CD4-positive, alpha-beta T cell (primary cell): ENCODE measurements at regions of chr17 and their contacts with region 1.

Region 1: DNA sequence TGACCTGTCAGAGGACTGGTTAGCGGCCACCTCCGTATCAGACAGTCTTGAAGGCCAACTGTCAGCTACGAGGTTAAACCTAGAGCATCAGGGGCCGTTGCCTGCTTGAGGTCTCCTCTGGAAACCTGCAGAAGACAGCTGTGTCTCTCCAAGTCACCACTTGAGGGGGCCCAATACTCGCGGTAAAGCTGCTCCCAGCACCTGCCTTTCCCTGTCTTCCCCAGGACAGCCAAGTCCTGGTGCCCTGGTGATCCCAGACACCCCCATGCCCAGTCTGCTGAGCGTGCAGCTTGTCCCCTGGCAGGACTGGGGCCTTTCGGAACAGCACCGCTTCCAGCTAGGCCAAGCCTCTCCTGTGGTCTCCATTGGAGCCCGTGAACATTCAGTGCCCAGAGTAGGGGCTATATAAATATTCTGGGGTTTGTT is 80.1 kb downstream of the DNAH17 start:
- DNase-seq: peak; percentile 10 to 78 (median 46)
- ATAC-seq: peak; percentile 76
- H3K4me3 ChIP-seq: no peak overlapping the region
- H3K4me3 Mint-ChIP-seq: no peak overlapping the region
- H3K27ac ChIP-seq: no peak overlapping the region
- H3K27ac Mint-ChIP-seq: no peak overlapping the region
- H3K4me1 ChIP-seq: no peaks in the 10 kb centered on the region
- H3K4me1 Mint-ChIP-seq: no peaks in the 10 kb centered on the region
- H3K27me3 ChIP-seq: no peaks in the 10 kb centered on the region
- H3K27me3 Mint-ChIP-seq: no peaks in the 10 kb centered on the region
- CTCF ChIP-seq: peak; percentile 63

Region 2: GRCh38 chr17:78557598-78558039 is 60.5 kb after region 1 on chr17:
- CTCF ChIA-PET with region 1: interaction called, 5 read pairs
- POLR2A ChIA-PET with region 1: no interaction called
- intact Hi-C with region 1: loop called in 1 of 2 experiments (anchors 5 kb)
- DNase-seq: no peak
- ATAC-seq: no peak
- H3K4me3 ChIP-seq: no peak overlapping the region
- H3K4me3 Mint-ChIP-seq: no peak overlapping the region
- H3K27ac ChIP-seq: no peak overlapping the region
- H3K27ac Mint-ChIP-seq: no peak overlapping the region
- H3K4me1 ChIP-seq: no peaks in the 10 kb centered on the region
- H3K4me1 Mint-ChIP-seq: no peaks in the 10 kb centered on the region
- H3K27me3 ChIP-seq: no peaks in the 10 kb centered on the region
- H3K27me3 Mint-ChIP-seq: no peaks in the 10 kb centered on the region
- CTCF ChIP-seq: no peak

Region 3: DNA sequence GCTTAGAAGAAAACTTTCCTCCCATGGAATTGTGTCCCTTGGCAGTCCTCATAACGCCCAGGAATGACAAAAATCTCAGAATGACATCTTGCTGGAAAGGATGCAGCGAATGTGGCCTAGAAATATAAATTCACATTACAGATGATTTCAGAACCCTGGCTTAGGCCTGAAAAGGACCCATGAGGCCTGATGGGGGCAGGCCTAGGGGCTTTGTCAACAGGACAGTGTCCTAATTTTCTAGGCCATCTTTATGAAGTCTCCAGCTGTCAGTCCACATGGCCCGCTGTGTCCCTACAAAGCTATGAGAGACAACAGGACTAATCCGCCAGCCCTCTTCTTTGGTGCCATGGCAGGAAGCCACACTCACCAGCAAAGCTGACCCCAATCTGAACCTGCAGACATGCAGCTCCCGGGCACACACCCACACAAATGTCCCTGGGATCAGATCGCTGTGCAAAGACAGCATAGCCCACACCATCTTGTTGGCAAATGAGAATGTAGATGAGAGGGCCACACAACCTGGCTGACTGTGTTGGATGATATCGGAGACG is 120.5 kb after region 1 on chr17:
- CTCF ChIA-PET with region 1: no interaction called
- POLR2A ChIA-PET with region 1: no interaction called
- intact Hi-C with region 1: no loop called
- DNase-seq: no peak
- ATAC-seq: no peak
- H3K4me3 ChIP-seq: no peak overlapping the region
- H3K4me3 Mint-ChIP-seq: no peak overlapping the region
- H3K27ac ChIP-seq: no peak overlapping the region
- H3K27ac Mint-ChIP-seq: no peak overlapping the region
- H3K4me1 ChIP-seq: no peaks in the 10 kb centered on the region
- H3K4me1 Mint-ChIP-seq: no peaks in the 10 kb centered on the region
- H3K27me3 ChIP-seq: no peaks in the 10 kb centered on the region
- H3K27me3 Mint-ChIP-seq: no peaks in the 10 kb centered on the region
- CTCF ChIP-seq: no peak

Region 4: GRCh38 chr17:78708510-78708973 is 211.4 kb after region 1 on chr17:
- CTCF ChIA-PET with region 1: no interaction called
- POLR2A ChIA-PET with region 1: no interaction called
- intact Hi-C with region 1: loop called (anchors 1 to 5 kb)
- DNase-seq: peak; percentile 42 to 81 (median 54)
- ATAC-seq: peak; percentile 81
- H3K4me3 ChIP-seq: no peak overlapping the region
- H3K4me3 Mint-ChIP-seq: peak overlapping the region; percentile 79
- H3K27ac ChIP-seq: peak overlapping the region; percentile 11 to 39
- H3K27ac Mint-ChIP-seq: peak overlapping the region; percentile 78
- H3K4me1 ChIP-seq: peaks cover 51% of the 10 kb centered on the region
- H3K4me1 Mint-ChIP-seq: peaks cover 67% of the 10 kb centered on the region
- H3K27me3 ChIP-seq: no peaks in the 10 kb centered on the region
- H3K27me3 Mint-ChIP-seq: no peaks in the 10 kb centered on the region
- CTCF ChIP-seq: peak; percentile 87

Region 5: GRCh38 chr17:78840725-78841611 is 343.8 kb after region 1 on chr17 and contains the start of gene USP36:
- CTCF ChIA-PET with region 1: no interaction called
- POLR2A ChIA-PET with region 1: no interaction called
- intact Hi-C with region 1: loop called in 1 of 2 experiments (anchors 2 kb)
- DNase-seq: peak; percentile 99 to 100 (median 100)
- ATAC-seq: peak; percentile 80
- H3K4me3 ChIP-seq: peak within 1 kb of the TSS; percentile 91
- H3K4me3 Mint-ChIP-seq: peak within 1 kb of the TSS; percentile 99
- H3K27ac ChIP-seq: peak within 1 kb of the TSS; percentile 96 to 99
- H3K27ac Mint-ChIP-seq: peak within 1 kb of the TSS; percentile 93
- H3K4me1 ChIP-seq: peaks cover 52% of the 10 kb centered on the region
- H3K4me1 Mint-ChIP-seq: peaks cover 56% of the 10 kb centered on the region
- H3K27me3 ChIP-seq: no peaks in the 10 kb centered on the region
- H3K27me3 Mint-ChIP-seq: no peaks in the 10 kb centered on the region
- CTCF ChIP-seq: peak; percentile 44
- total RNA-seq, gene USP36: 489 to 494 TPM

Region 6: DNA sequence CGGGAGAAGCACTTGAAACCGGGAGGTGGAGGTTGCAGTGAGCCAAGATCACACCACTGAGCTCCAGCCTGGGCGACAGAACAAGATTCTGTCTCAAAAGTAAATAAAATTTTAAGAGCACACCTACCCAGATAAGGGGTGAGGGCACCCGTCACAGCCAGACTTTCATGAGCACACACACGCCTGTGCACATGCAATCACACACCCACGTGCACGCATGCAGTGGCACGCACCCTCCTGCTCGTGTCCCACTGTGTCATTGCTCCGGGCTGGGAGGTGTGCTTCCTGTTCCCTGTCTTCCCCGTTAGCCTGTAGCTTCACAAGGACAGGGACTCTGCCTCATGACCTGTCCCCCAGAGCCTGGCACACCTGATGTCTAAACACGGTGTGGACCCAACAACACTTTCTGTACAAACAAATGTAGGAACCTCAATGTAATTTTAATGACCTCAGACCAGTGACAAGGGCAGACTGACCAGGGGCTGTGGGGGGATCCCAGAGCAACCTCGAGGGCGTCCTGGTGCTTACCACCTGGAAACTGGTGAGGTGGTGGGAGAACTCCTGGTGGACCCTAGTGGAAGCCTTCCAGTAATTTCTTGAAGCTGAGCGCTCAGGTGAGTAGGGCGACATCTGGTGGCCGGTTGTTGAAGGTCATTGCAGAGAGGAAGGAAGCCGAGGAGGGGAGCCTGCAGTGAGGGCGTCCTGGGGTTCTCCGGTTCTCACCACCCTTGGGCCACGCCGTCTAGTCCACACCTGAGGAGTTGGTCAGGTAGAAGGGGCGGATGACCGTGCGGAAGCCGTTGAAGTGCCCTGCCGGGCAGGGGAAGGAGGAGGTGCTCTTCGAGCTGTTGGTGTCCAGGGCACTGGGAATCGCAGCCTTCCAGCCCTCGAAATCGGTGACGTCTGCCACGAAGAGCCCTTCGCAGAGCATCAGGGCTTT is 474.0 kb after region 1 on chr17:
- CTCF ChIA-PET with region 1: interaction called, 14 read pairs
- POLR2A ChIA-PET with region 1: interaction called, 3 read pairs
- intact Hi-C with region 1: loop called (anchors 1 kb)
- DNase-seq: peak; percentile 67 to 88 (median 76)
- ATAC-seq: peak; percentile 84
- H3K4me3 ChIP-seq: no peak overlapping the region
- H3K4me3 Mint-ChIP-seq: peak overlapping the region; percentile 40
- H3K27ac ChIP-seq: no peak overlapping the region
- H3K27ac Mint-ChIP-seq: peak overlapping the region; percentile 59
- H3K4me1 ChIP-seq: peaks cover 18% of the 10 kb centered on the region
- H3K4me1 Mint-ChIP-seq: peaks cover 7% of the 10 kb centered on the region
- H3K27me3 ChIP-seq: no peaks in the 10 kb centered on the region
- H3K27me3 Mint-ChIP-seq: no peaks in the 10 kb centered on the region
- CTCF ChIP-seq: peak; percentile 95